Astrocyte of the cerebellum (primary cell): ENCODE measurements at regions of chr9 and their contacts with region 1.

Region 1: DNA sequence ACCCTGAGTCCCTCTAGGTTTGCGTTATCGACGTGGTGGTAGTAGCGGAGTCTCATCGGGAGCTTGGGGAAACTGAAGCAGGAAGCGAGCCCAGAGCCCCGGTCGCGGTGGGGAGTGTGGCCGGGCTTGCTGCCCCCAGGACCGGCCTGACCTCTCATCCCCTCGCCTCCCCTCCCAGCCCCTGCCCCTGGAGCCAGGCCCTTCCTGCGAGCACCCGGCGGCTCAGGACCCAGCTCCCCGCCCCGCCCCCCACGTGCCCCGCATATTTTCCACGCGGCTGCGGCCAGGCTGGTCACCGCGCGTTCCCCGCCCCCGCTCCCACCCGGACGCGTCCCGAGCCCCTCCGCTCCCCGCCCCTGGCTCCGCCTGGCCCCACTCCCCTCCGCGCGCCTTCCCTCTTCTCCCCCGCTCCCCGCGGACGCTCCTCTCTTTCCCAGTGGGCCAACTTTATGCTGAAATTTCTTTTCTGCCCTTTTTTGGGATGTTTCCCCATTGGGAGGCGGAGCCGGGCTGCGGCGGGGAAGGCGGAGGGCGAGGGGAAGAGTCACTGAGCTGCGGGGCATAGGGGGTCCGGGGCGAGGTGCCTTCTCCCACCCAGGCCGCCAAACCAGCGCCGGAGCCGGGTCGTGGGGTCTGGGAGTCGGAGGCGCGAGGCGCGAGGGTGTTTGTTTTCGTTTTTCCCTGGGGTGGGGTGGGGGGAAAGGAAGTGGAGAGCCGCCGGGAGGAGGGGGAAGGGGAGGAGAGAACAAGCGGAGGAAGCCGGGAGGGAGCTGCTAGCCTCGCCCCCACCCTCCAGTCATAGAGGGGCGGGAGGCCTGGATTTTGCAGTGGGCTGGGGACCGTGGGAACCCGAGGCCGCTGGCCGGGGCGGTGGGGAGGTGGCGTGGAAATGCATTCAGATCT is 957 bp upstream of the TPM2 start:
- DNase-seq: no peak
- H3K4me3 ChIP-seq: peak overlapping the region; percentile 85
- CTCF ChIP-seq: no peak

Region 2: DNA sequence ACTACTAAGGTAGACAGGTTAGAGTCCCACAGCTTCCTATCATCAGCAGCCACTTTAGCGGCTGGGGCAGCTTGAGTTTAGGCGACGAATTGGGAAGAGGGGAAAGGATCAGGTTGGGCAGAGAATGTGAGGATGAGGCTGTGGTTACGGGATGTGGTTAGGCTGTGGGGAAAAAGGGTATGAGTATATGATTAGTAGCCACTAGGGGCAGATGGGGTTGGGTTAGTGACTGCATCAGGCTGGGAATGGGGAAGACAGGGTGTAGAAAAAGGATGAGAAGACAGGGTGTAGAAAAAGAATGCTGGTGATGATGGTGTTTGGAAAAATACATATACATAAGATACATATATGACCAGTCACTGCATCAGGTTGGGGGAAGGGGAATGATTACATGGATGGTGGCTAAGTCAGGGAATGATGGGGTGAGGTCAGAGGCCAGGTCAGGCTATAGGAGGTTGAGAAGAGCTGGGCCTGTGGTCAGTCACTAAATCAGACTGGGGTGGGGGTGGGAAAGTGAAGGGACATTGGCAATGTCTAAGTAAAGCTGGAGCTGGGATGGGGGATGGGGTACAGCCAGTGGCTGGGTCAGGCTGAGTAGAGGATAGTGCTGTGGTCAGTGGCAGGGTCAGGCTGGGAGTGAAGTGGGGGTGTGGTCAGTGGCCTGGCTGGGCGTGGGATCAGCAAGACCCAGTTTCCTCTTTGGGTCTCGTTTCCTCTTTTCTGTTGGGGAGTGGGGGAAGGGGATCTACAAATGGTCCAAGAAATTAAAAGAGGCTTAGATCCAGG is 39.2 kb after region 1 on chr9:
- in situ Hi-C with region 1: loop called (anchors 5 kb)
- DNase-seq: peak; percentile 57
- H3K4me3 ChIP-seq: peak overlapping the region; percentile 88
- CTCF ChIP-seq: peak; percentile 71